Dendritic cell treated with granulocyte-macrophage colony-stimulating factor and Interleukin-4, amounts not matched to agents 40 ng/mL and 50 ng/mL, for 4 days (primary cell): ENCODE measurements at regions of chr3 and their contacts with region 1.

Region 1: GRCh38 chr3:149120051-149120972 is 9.1 kb upstream of the HPS3 start:
- H3K4me3 Mint-ChIP-seq: no peak overlapping the region
- H3K27ac Mint-ChIP-seq: no peak overlapping the region
- H3K4me1 Mint-ChIP-seq: no peaks in the 10 kb centered on the region
- H3K27me3 Mint-ChIP-seq: no peaks in the 10 kb centered on the region

Region 2: GRCh38 chr3:149152420-149152819 is 32.1 kb after region 1 on chr3:
- intact Hi-C with region 1: loop called (anchors 5 kb)
- H3K4me3 Mint-ChIP-seq: no peak overlapping the region
- H3K27ac Mint-ChIP-seq: peak overlapping the region; percentile 27
- H3K4me1 Mint-ChIP-seq: peaks cover 17% of the 10 kb centered on the region
- H3K27me3 Mint-ChIP-seq: no peaks in the 10 kb centered on the region

Region 3: DNA sequence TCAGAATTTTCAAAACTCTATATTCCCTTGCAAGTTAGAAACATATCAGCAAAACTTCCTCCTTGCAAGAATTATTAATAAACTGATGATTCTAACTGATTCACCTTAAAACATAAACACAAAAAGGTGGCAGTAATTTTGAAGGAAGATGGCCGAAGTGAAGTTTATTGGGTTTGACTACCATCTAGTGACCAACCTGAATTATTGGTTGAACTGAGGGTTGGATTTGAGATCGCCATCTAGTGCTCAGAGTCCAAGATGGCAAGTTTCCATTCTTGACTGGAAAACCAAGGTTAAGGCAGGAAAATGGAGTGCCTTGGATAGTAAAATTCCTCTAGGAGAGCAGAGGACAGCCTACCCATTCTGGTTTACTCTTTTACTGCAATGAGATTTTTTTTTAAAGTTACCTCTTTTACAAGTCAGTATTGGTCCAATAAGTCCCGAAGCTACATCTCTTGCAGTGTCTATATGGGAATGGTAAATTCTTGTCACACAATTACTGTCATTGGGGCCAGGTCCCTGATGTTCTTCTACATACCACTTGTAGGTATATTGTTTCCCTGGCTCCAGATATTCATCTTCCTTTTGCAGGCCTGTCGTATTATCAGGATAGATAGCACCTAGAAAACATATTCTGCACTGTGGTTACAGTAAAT is 152.9 kb after region 1 on chr3:
- intact Hi-C with region 1: loop called (anchors 1 kb)
- H3K4me3 Mint-ChIP-seq: no peak overlapping the region
- H3K27ac Mint-ChIP-seq: no peak overlapping the region
- H3K4me1 Mint-ChIP-seq: peaks cover 7% of the 10 kb centered on the region
- H3K27me3 Mint-ChIP-seq: no peaks in the 10 kb centered on the region